CD4-positive, alpha-beta memory T cell (primary cell): ENCODE measurements at regions of chr3 and their contacts with region 1.

Region 1: GRCh38 chr3:15332405-15333098 is at the start of gene SH3BP5:
- DNase-seq: peak; percentile 69 to 79 (median 74)
- H3K4me3 ChIP-seq: peak within 1 kb of the TSS; percentile 39 to 97
- H3K4me3 Mint-ChIP-seq: peak within 1 kb of the TSS; percentile 91 to 98 (median 98)
- H3K27ac ChIP-seq: peak within 1 kb of the TSS; percentile 79
- H3K27ac Mint-ChIP-seq: peak within 1 kb of the TSS; percentile 94 to 96 (median 94)
- H3K4me1 ChIP-seq: peaks cover 54% of the 10 kb centered on the region
- H3K4me1 Mint-ChIP-seq: peaks cover 35 to 64% (median 53%) of the 10 kb centered on the region in 4 donors
- H3K27me3 ChIP-seq: no peaks in the 10 kb centered on the region
- H3K27me3 Mint-ChIP-seq: no peaks in the 10 kb centered on the region
- total RNA-seq, gene SH3BP5: 55.8 to 56.9 TPM

Region 2: GRCh38 chr3:15300323-15301078 is 32.1 kb before region 1 on chr3:
- CTCF ChIA-PET with region 1: interaction called, 13 read pairs
- POLR2A ChIA-PET with region 1: interaction called, 18 read pairs
- intact Hi-C with region 1: no loop called
- DNase-seq: no peak
- H3K4me3 ChIP-seq: peak overlapping the region in 1 of 2 donors; percentile 3
- H3K4me3 Mint-ChIP-seq: peak overlapping the region in 6 of 8 donors; percentile 51 to 78 (median 74)
- H3K27ac ChIP-seq: no peak overlapping the region
- H3K27ac Mint-ChIP-seq: peak overlapping the region; percentile 70 to 88 (median 77)
- H3K4me1 ChIP-seq: peaks cover 95% of the 10 kb centered on the region
- H3K4me1 Mint-ChIP-seq: peaks cover 60 to 97% (median 80%) of the 10 kb centered on the region in 4 donors
- H3K27me3 ChIP-seq: no peaks in the 10 kb centered on the region
- H3K27me3 Mint-ChIP-seq: no peaks in the 10 kb centered on the region

Region 3: GRCh38 chr3:15319575-15319974 is 13.0 kb before region 1 on chr3:
- CTCF ChIA-PET with region 1: interaction called, 15 read pairs
- POLR2A ChIA-PET with region 1: interaction called, 48 read pairs
- intact Hi-C with region 1: no loop called
- DNase-seq: no peak
- H3K4me3 ChIP-seq: no peak overlapping the region
- H3K4me3 Mint-ChIP-seq: peak overlapping the region; percentile 9 to 88 (median 38)
- H3K27ac ChIP-seq: peak overlapping the region; percentile 5
- H3K27ac Mint-ChIP-seq: peak overlapping the region in 4 of 7 donors; percentile 46 to 90 (median 86)
- H3K4me1 ChIP-seq: peaks cover 88% of the 10 kb centered on the region
- H3K4me1 Mint-ChIP-seq: peaks cover 63 to 96% (median 77%) of the 10 kb centered on the region in 4 donors
- H3K27me3 ChIP-seq: no peaks in the 10 kb centered on the region
- H3K27me3 Mint-ChIP-seq: no peaks in the 10 kb centered on the region

Region 4: GRCh38 chr3:15356186-15356585 is 23.6 kb after region 1 on chr3:
- CTCF ChIA-PET with region 1: interaction called, 51 read pairs
- POLR2A ChIA-PET with region 1: interaction called, 20 read pairs
- intact Hi-C with region 1: no loop called
- DNase-seq: no peak
- H3K4me3 ChIP-seq: peak overlapping the region in 1 of 2 donors; percentile 49
- H3K4me3 Mint-ChIP-seq: peak overlapping the region; percentile 62 to 91 (median 80)
- H3K27ac ChIP-seq: peak overlapping the region; percentile 72
- H3K27ac Mint-ChIP-seq: peak overlapping the region; percentile 90 to 99 (median 97)
- H3K4me1 ChIP-seq: peaks cover 67% of the 10 kb centered on the region
- H3K4me1 Mint-ChIP-seq: peaks cover 30 to 58% (median 46%) of the 10 kb centered on the region in 4 donors
- H3K27me3 ChIP-seq: no peaks in the 10 kb centered on the region
- H3K27me3 Mint-ChIP-seq: no peaks in the 10 kb centered on the region

Region 5: GRCh38 chr3:15377961-15378791 is 45.6 kb after region 1 on chr3:
- CTCF ChIA-PET with region 1: interaction called, 7 read pairs
- POLR2A ChIA-PET with region 1: interaction called, 8 read pairs
- intact Hi-C with region 1: loop called (anchors 1 kb)
- DNase-seq: peak; percentile 94 to 97 (median 95)
- H3K4me3 ChIP-seq: no peak overlapping the region
- H3K4me3 Mint-ChIP-seq: peak overlapping the region in 5 of 8 donors; percentile 11 to 82 (median 22)
- H3K27ac ChIP-seq: peak overlapping the region; percentile 91
- H3K27ac Mint-ChIP-seq: peak overlapping the region; percentile 95 to 98 (median 97)
- H3K4me1 ChIP-seq: peaks cover 5% of the 10 kb centered on the region
- H3K4me1 Mint-ChIP-seq: peaks cover 9 to 10% (median 9%) of the 10 kb centered on the region in 4 donors
- H3K27me3 ChIP-seq: no peaks in the 10 kb centered on the region
- H3K27me3 Mint-ChIP-seq: peaks cover 0 to 1% of the 10 kb centered on the region in 2 donors